Activated CD4-positive, alpha-beta T cell treated with anti-CD3 and anti-CD28 coated beads, Interleukin-2, amount 10 ng/mL, durations not matched to agents 7 days and 5 days (primary cell): ENCODE measurements at regions of chr6 and their contacts with region 1.

Region 1: DNA sequence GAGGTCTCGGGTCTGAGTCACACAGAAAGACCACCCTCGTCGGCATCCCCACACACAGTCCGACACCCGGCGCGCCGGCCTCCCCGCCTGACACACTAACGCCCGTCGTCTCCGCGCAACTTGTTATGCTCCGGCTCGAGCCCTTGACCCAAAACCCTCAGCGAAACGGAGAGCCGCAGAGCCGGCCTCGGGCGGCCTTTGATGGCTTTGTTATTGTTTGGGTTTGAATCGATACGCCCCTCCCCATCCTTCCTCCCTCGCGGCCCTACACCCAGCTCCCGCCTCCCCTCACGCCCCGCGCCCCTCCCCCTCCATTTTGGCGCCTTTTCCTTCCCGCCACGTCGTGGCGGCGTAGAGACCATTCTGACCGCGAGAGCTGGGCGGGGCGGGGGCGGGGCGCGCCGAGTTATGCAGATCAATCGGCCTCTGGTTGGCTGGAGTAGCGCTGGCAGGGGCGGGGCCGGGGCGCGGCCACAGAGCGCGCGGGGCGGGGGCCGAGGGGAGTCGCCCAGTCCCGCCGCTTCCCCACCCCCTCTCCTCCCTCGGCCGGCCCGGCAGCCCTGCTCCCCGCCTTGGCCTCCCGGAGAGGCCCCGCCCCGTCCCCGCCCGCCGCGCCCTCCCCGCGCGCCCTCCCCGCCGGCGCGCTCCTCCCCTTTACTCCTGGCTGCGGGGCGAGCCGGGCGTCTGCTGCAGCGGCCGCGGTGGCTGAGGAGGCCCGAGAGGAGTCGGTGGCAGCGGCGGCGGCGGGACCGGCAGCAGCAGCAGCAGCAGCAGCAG is at the start of gene PIM1:
- DNase-seq: peak; percentile 99
- H3K4me3 Mint-ChIP-seq: peak within 1 kb of the TSS; percentile 99
- H3K27ac Mint-ChIP-seq: peak within 1 kb of the TSS; percentile 99
- H3K4me1 Mint-ChIP-seq: peaks cover 30% of the 10 kb centered on the region
- H3K27me3 Mint-ChIP-seq: peaks cover 6% of the 10 kb centered on the region
- total RNA-seq, gene PIM1: 393 to 412 TPM

Region 2: DNA sequence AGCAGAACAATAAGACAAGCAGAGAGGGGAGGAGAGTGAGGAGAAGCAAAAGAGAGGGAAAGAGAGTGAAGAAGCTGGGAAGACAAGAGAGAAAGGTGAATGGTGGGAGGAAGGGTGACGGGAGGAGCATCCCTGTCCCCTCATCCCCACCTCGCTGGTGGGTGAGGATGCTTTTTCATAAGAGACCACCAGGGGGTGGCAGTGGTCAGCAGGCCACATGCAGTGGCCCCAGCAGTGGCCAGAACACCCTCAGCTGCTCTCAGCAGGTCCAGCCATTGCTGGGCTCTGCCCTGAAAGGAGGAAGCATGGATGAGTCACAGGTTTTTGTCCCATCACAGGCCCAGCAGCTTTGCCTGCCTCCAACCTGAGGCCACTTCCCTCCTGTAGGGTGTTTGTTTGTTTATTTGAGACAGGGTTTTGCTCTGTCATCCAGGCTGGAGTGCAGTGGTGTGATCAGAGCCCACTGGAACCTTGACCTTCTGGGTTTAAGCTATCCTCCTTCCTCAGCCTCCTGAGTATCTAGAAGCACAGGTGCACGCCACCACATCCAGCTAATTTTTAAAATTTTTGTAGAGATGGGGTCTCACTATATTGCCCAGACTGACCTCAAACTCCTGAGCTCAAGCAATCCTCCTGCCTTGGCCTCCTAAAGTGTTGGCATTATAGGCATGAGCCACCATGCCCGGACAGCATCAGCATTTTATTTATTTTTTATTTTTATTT is 140.3 kb before region 1 on chr6:
- CTCF ChIA-PET with region 1: interaction called, 347 read pairs
- POLR2A ChIA-PET with region 1: interaction called, 5 read pairs
- DNase-seq: peak; percentile 44
- H3K4me3 Mint-ChIP-seq: no peak overlapping the region
- H3K27ac Mint-ChIP-seq: peak overlapping the region; percentile 79
- H3K4me1 Mint-ChIP-seq: peaks cover 74% of the 10 kb centered on the region
- H3K27me3 Mint-ChIP-seq: no peaks in the 10 kb centered on the region

Region 3: DNA sequence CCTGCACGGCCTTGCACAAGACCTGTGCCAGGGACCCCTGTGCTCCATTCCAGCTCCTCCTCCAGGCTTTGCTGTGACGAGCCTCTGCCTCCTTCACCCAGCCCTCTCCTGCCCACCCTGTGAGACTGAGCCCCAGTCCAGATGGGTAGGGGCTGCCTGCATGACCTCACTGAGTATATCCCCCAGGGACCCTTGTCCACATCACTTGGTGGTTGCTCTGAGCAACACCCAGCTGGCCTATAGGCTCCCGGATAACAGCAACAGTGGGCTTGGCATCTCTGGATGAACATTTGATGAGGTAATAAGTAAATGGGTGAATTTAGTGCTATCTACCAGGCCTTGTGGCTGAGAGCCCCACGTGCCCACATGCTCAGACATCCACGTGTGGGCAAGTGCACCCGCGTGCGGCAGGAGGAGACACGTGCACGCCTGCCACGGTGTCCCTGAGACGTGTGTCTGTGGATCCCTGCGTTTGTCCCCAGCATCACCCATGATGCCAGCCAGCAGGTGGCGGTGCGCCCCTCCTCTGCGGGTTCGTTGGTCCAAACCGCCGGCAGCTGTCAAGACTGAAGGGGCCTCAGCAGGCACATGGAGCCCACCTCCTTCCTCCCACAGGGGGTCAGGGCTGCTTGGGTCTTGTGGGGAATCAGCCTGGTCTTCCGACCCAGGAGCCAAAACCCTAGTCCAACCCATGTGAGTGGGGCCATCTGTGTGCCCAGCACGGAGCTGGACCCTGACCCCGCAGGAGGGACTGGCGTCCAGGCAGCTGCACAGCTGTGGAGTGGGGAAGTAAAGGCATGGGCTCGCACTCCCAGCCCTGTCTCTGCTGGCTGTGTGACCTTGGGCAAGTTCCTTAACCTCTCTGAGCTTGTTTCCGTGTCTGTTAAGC is 118.3 kb before region 1 on chr6:
- CTCF ChIA-PET with region 1: interaction called, 104 read pairs
- POLR2A ChIA-PET with region 1: interaction called, 8 read pairs
- DNase-seq: peak; percentile 91
- H3K4me3 Mint-ChIP-seq: peak overlapping the region; percentile 76
- H3K27ac Mint-ChIP-seq: peak overlapping the region; percentile 92
- H3K4me1 Mint-ChIP-seq: peaks cover 75% of the 10 kb centered on the region
- H3K27me3 Mint-ChIP-seq: no peaks in the 10 kb centered on the region

Region 4: GRCh38 chr6:37119387-37119886 is 50.2 kb before region 1 on chr6:
- CTCF ChIA-PET with region 1: no interaction called
- POLR2A ChIA-PET with region 1: no interaction called
- DNase-seq: no peak
- H3K4me3 Mint-ChIP-seq: no peak overlapping the region
- H3K27ac Mint-ChIP-seq: no peak overlapping the region
- H3K4me1 Mint-ChIP-seq: peaks cover 5% of the 10 kb centered on the region
- H3K27me3 Mint-ChIP-seq: peaks cover 3% of the 10 kb centered on the region

Region 5: GRCh38 chr6:37182736-37183590 is 13.3 kb after region 1 on chr6:
- CTCF ChIA-PET with region 1: interaction called, 54 read pairs
- POLR2A ChIA-PET with region 1: no interaction called
- DNase-seq: peak; percentile 83
- H3K4me3 Mint-ChIP-seq: peak overlapping the region; percentile 60
- H3K27ac Mint-ChIP-seq: peak overlapping the region; percentile 94
- H3K4me1 Mint-ChIP-seq: peaks cover 70% of the 10 kb centered on the region
- H3K27me3 Mint-ChIP-seq: no peaks in the 10 kb centered on the region

Region 6: GRCh38 chr6:37190159-37190535 is 20.5 kb after region 1 on chr6:
- CTCF ChIA-PET with region 1: interaction called, 43 read pairs
- POLR2A ChIA-PET with region 1: no interaction called
- DNase-seq: no peak
- H3K4me3 Mint-ChIP-seq: no peak overlapping the region
- H3K27ac Mint-ChIP-seq: peak overlapping the region; percentile 81
- H3K4me1 Mint-ChIP-seq: peaks cover 77% of the 10 kb centered on the region
- H3K27me3 Mint-ChIP-seq: no peaks in the 10 kb centered on the region

Region 7: DNA sequence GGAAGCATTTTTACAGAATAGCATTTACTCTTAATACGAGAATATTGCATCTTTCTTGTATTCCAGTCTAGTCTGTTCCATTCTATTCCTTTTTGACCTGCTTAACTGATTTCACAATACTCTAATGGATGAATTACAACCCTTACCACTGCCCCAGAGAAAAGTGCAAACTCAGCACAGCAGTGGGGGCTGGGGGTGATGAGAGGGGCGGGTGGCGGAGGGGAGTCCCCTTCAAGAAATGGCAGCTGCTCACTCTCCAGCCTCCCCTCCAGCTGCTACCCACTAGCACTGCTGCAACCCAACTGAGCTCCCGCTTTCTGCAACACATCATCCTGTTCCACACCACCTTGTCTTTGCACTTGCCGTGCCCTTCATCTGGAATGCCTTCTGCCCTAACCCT is 30.4 kb after region 1 on chr6:
- CTCF ChIA-PET with region 1: interaction called, 164 read pairs
- POLR2A ChIA-PET with region 1: no interaction called
- DNase-seq: no peak
- H3K4me3 Mint-ChIP-seq: no peak overlapping the region
- H3K27ac Mint-ChIP-seq: no peak overlapping the region
- H3K4me1 Mint-ChIP-seq: peaks cover 36% of the 10 kb centered on the region
- H3K27me3 Mint-ChIP-seq: no peaks in the 10 kb centered on the region

Region 8: DNA sequence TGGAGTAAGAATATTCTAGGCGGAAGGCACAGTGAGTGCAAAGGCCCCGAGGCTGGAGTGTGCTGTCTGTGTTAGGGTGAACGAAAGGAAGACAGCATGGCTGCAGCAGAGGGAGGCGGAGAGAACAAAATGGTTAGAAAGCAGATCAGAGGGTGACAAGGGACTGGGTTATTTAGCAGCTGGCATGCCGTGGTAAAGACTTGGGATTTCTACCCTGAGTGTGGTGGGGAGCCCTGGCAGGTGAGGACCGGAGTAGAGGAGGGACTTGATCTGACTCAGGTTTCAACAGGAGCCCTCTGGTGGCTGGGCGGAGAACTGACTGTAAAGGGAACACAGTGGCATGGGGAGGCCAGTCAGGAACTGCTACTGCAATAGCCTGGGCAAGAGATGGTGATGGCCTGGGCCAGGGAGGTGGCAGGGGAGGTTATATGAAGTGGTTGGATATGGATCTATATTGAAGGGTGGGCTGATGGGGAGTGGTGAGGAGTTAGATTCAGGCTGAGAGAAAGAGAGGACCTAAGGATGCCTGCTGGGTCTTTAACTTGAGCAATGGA is 38.3 kb after region 1 on chr6:
- CTCF ChIA-PET with region 1: interaction called, 164 read pairs
- POLR2A ChIA-PET with region 1: interaction called, 22 read pairs
- DNase-seq: peak; percentile 93
- H3K4me3 Mint-ChIP-seq: peak overlapping the region; percentile 6
- H3K27ac Mint-ChIP-seq: peak overlapping the region; percentile 86
- H3K4me1 Mint-ChIP-seq: peaks cover 76% of the 10 kb centered on the region
- H3K27me3 Mint-ChIP-seq: no peaks in the 10 kb centered on the region

Region 9: DNA sequence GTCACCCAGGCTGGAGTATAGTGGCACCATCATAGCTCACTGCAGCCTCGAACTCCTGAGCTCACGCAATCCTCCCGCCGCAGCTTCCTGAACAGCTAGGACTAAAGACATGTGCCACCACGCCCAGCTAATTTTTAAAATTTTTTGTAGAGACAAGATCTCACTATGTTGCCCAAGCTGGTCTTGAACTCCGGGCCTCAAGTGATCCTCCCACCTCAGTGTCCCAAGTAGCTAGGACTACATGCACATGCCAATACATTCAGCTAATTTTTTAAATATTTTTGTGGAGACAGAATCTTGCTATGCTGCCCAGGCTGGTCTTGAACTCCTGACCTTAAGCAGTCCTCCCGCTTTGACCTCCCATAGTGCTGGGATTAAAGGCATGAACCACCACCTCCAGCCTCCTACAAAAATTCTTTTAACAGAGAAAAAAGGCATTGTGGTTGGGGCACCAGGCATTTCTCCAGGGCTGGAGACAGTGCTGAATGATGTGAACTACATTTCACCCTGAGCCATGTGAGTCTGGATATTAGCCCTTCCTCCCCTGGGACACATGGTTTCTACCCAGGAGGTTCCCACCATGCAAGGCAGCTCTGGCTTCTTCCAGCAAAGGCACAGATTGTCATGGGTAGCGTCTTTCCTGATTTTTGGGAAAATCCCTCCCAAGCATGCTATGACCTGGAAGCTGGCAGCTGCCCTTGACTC is 226.9 kb after region 1 on chr6:
- CTCF ChIA-PET with region 1: no interaction called
- POLR2A ChIA-PET with region 1: no interaction called
- DNase-seq: no peak
- H3K4me3 Mint-ChIP-seq: no peak overlapping the region
- H3K27ac Mint-ChIP-seq: no peak overlapping the region
- H3K4me1 Mint-ChIP-seq: no peaks in the 10 kb centered on the region
- H3K27me3 Mint-ChIP-seq: peaks cover 11% of the 10 kb centered on the region